ENCODE measurements at regions of chr16 and their contacts with region 1.

Region 1: GRCh38 chr16:31202414-31203375 is at the start of gene PYCARD:
- DNase-seq: peak; percentile 69
- CTCF ChIP-seq: no peak

Region 2: DNA sequence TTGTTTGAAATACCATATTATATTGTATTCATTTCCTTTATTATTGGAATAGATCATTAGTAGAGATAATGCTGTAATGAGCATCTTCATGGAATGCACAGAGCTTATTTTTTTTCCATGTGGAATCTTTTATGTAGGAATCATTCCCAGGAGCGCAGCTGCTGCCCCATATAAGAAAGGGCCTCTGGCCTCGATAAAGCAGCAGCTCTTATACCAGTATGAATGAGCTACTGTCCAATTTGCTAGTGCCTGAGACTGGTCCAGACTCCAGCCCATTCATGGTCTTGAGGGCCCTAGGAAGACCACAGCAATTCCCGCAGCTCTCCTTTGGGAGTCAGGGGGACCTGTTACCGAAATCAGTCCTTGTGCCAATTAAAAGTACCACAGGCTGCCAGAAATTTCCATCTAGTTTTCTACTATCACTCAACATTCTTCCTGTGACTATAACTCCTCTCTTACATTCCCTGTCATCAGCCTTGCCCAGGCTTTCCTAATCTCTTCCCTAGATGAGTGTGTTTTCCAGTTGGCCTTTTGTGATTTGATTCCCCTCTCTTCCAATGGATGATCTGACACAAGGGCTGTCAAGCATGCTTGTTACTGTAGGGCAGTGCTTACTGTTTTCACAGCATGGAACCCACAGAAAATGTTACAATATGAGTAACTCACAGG is 238.0 kb after region 1 on chr16:
- in situ Hi-C with region 1: loop called (anchors 10 kb)
- DNase-seq: no peak
- CTCF ChIP-seq: no peak

Measured in GM13977 (cell line).